CD4-positive, alpha-beta T cell (primary cell): ENCODE measurements at regions of chr6 and their contacts with region 1.

Region 1: DNA sequence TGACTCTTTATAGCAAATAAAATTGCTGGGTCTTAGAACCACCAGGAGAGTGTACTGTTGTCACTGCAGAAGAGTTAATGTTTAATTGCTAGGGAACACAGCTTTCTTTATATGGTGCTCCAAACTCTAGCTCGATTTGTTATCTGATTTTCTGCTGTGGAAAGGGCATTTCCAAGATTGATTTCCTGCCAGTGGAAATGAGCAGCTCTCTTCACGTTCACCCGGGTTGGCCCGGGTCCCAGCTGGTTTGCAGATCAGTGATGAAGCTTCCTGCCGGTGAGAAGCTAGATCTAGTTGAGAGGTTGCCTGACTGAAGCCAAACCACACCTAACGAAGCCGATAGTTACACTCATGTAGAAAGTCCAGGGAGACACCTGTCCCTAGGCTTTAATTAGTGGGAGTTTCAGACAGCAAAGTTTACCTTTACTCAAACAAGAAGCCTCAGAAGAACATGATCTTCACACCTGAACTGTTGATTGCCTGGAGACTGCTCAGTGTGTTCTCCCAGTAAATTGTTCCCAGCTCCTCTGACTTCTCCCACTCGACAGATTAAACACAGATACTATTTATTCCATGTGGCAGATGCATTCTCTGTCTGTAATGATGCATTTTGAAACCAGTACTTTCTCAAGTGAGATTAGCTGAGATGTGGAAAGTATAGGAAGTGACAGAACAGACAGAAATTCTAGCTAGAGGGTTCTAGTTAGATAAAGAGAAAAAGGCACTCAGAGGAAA is 27.8 kb downstream of the PAQR8 start:
- DNase-seq: peak; percentile 32 to 87 (median 60)
- ATAC-seq: peak; percentile 45
- H3K4me3 ChIP-seq: peak overlapping the region; percentile 31
- H3K4me3 Mint-ChIP-seq: peak overlapping the region; percentile 87
- H3K27ac ChIP-seq: peak overlapping the region; percentile 63 to 91
- H3K27ac Mint-ChIP-seq: peak overlapping the region; percentile 97
- H3K4me1 ChIP-seq: peaks cover 59% of the 10 kb centered on the region
- H3K4me1 Mint-ChIP-seq: peaks cover 93% of the 10 kb centered on the region
- H3K27me3 ChIP-seq: no peaks in the 10 kb centered on the region
- H3K27me3 Mint-ChIP-seq: no peaks in the 10 kb centered on the region
- CTCF ChIP-seq: peak; percentile 53

Region 2: GRCh38 chr6:52304983-52305390 is 84.8 kb before region 1 on chr6:
- CTCF ChIA-PET with region 1: interaction called, 3 read pairs
- POLR2A ChIA-PET with region 1: interaction called, 30 read pairs
- intact Hi-C with region 1: loop called in 1 of 2 experiments (anchors 5 kb)
- DNase-seq: peak in 3 of 14 experiments; percentile 45 to 52 (median 46)
- ATAC-seq: peak; percentile 25
- H3K4me3 ChIP-seq: peak overlapping the region; percentile 10
- H3K4me3 Mint-ChIP-seq: peak overlapping the region; percentile 80
- H3K27ac ChIP-seq: peak overlapping the region; percentile 64 to 89
- H3K27ac Mint-ChIP-seq: peak overlapping the region; percentile 92
- H3K4me1 ChIP-seq: peaks cover 71% of the 10 kb centered on the region
- H3K4me1 Mint-ChIP-seq: peaks cover 80% of the 10 kb centered on the region
- H3K27me3 ChIP-seq: no peaks in the 10 kb centered on the region
- H3K27me3 Mint-ChIP-seq: no peaks in the 10 kb centered on the region
- CTCF ChIP-seq: no peak

Region 3: GRCh38 chr6:52333840-52334200 is 56.0 kb before region 1 on chr6:
- CTCF ChIA-PET with region 1: interaction called, 10 read pairs
- POLR2A ChIA-PET with region 1: interaction called, 4 read pairs
- intact Hi-C with region 1: no loop called
- DNase-seq: peak in 5 of 14 experiments; percentile 1 to 87 (median 50)
- ATAC-seq: peak; percentile 85
- H3K4me3 ChIP-seq: peak overlapping the region; percentile 10
- H3K4me3 Mint-ChIP-seq: peak overlapping the region; percentile 70
- H3K27ac ChIP-seq: peak overlapping the region; percentile 65 to 79
- H3K27ac Mint-ChIP-seq: peak overlapping the region; percentile 87
- H3K4me1 ChIP-seq: peaks cover 48% of the 10 kb centered on the region
- H3K4me1 Mint-ChIP-seq: peaks cover 79% of the 10 kb centered on the region
- H3K27me3 ChIP-seq: no peaks in the 10 kb centered on the region
- H3K27me3 Mint-ChIP-seq: no peaks in the 10 kb centered on the region
- CTCF ChIP-seq: no peak

Region 4: GRCh38 chr6:52361945-52362442 is 27.8 kb before region 1 on chr6 and contains the start of gene PAQR8:
- CTCF ChIA-PET with region 1: interaction called, 32 read pairs
- POLR2A ChIA-PET with region 1: interaction called, 132 read pairs
- intact Hi-C with region 1: loop called (anchors 2 kb)
- DNase-seq: peak; percentile 67 to 93 (median 78)
- ATAC-seq: peak; percentile 84
- H3K4me3 ChIP-seq: peak within 1 kb of the TSS; percentile 80
- H3K4me3 Mint-ChIP-seq: peak within 1 kb of the TSS; percentile 98
- H3K27ac ChIP-seq: peak within 1 kb of the TSS; percentile 81 to 88
- H3K27ac Mint-ChIP-seq: peak within 1 kb of the TSS; percentile 92
- H3K4me1 ChIP-seq: peaks cover 29% of the 10 kb centered on the region
- H3K4me1 Mint-ChIP-seq: peaks cover 53% of the 10 kb centered on the region
- H3K27me3 ChIP-seq: no peaks in the 10 kb centered on the region
- H3K27me3 Mint-ChIP-seq: no peaks in the 10 kb centered on the region
- CTCF ChIP-seq: no peak
- total RNA-seq, gene PAQR8: 1.8 to 1.9 TPM

Region 5: DNA sequence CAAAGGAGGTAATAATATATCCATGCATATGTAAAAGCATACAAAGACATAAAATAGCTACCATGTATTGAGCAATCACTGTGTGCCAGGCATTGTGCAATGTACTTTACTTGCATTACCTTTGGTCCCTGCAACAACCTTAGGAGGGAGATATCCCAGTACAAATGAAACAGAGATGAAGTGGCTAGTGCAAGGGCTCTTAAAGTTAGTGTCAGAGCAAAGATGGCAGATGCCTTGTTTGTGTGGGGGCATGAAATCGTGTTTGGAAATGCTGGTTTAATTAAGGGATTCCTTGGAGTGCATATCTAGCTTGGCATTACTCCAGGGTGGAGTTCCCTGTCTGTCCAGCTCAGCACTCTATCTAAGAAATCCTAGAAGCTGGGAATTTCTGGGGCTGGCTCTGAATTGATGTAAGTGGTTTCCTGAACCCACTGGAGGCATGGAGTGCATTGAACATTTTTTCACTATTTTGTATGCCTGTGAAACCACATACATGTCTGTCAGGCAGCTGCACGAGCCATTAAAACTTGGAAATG is 18.1 kb before region 1 on chr6:
- CTCF ChIA-PET with region 1: interaction called, 5 read pairs
- POLR2A ChIA-PET with region 1: interaction called, 132 read pairs
- intact Hi-C with region 1: loop called in 1 of 2 experiments (anchors 2 kb)
- DNase-seq: no peak
- ATAC-seq: no peak
- H3K4me3 ChIP-seq: no peak overlapping the region
- H3K4me3 Mint-ChIP-seq: no peak overlapping the region
- H3K27ac ChIP-seq: no peak overlapping the region
- H3K27ac Mint-ChIP-seq: peak overlapping the region; percentile 67
- H3K4me1 ChIP-seq: peaks cover 31% of the 10 kb centered on the region
- H3K4me1 Mint-ChIP-seq: peaks cover 88% of the 10 kb centered on the region
- H3K27me3 ChIP-seq: no peaks in the 10 kb centered on the region
- H3K27me3 Mint-ChIP-seq: no peaks in the 10 kb centered on the region
- CTCF ChIP-seq: no peak

Region 6: DNA sequence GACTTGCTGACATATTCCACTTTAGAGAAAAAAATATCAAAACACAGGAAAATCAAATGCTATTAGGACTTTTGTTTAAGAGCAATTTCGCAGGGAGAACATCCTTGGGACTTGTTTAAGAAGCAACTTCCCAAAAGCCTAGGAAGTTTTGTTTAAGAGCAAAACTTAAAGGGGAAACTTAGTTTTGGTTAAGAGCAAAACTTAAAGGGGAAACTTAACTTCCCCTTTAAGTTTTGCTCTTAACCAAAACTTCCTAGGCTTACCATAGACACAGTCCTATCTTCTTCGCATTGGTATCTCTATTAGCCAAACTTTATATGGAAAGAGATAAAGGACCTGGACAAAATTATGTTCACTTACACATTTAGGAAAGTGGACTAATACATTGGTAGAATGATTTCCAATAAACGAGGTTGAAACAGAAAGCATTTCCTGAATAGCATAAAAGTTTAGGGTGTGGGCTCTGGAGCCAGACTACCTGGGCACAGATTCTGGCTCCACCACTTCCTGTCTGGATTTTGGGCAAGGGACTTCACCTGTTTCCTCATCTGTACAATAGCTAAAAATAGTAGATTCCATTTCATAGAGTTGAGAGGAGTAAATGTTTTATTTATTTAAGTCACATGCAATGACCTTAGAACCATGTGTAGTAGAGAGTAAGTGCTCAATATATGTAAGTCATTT is 12.1 kb before region 1 on chr6:
- CTCF ChIA-PET with region 1: interaction called, 3 read pairs
- POLR2A ChIA-PET with region 1: interaction called, 83 read pairs
- intact Hi-C with region 1: loop called in 1 of 2 experiments (anchors 2 kb)
- DNase-seq: peak in 5 of 14 experiments; percentile 12 to 47 (median 33)
- ATAC-seq: peak; percentile 72
- H3K4me3 ChIP-seq: no peak overlapping the region
- H3K4me3 Mint-ChIP-seq: peak overlapping the region; percentile 70
- H3K27ac ChIP-seq: no peak overlapping the region
- H3K27ac Mint-ChIP-seq: peak overlapping the region; percentile 80
- H3K4me1 ChIP-seq: peaks cover 41% of the 10 kb centered on the region
- H3K4me1 Mint-ChIP-seq: peaks cover 82% of the 10 kb centered on the region
- H3K27me3 ChIP-seq: no peaks in the 10 kb centered on the region
- H3K27me3 Mint-ChIP-seq: no peaks in the 10 kb centered on the region
- CTCF ChIP-seq: no peak

Region 7: GRCh38 chr6:52407467-52407866 is 17.7 kb after region 1 on chr6:
- CTCF ChIA-PET with region 1: interaction called, 55 read pairs
- POLR2A ChIA-PET with region 1: interaction called, 138 read pairs
- intact Hi-C with region 1: no loop called
- DNase-seq: peak in 4 of 14 experiments; percentile 19 to 69 (median 61)
- ATAC-seq: peak; percentile 97
- H3K4me3 ChIP-seq: no peak overlapping the region
- H3K4me3 Mint-ChIP-seq: no peak overlapping the region
- H3K27ac ChIP-seq: no peak overlapping the region
- H3K27ac Mint-ChIP-seq: peak overlapping the region; percentile 81
- H3K4me1 ChIP-seq: peaks cover 11% of the 10 kb centered on the region
- H3K4me1 Mint-ChIP-seq: peaks cover 38% of the 10 kb centered on the region
- H3K27me3 ChIP-seq: no peaks in the 10 kb centered on the region
- H3K27me3 Mint-ChIP-seq: no peaks in the 10 kb centered on the region
- CTCF ChIP-seq: peak; percentile 57